Activated CD4-positive, alpha-beta memory T cell treated with anti-CD3 and anti-CD28 coated beads for 36 hours (primary cell): ENCODE measurements at regions of chr11 and their contacts with region 1.

Region 1: GRCh38 chr11:104918113-104918824 is 20.0 kb upstream of the CASP12 start:
- DNase-seq: no peak
- H3K4me3 Mint-ChIP-seq: peak overlapping the region; percentile 76
- H3K27ac Mint-ChIP-seq: peak overlapping the region; percentile 83
- H3K4me1 Mint-ChIP-seq: peaks cover 43% of the 10 kb centered on the region
- H3K27me3 Mint-ChIP-seq: no peaks in the 10 kb centered on the region

Region 2: DNA sequence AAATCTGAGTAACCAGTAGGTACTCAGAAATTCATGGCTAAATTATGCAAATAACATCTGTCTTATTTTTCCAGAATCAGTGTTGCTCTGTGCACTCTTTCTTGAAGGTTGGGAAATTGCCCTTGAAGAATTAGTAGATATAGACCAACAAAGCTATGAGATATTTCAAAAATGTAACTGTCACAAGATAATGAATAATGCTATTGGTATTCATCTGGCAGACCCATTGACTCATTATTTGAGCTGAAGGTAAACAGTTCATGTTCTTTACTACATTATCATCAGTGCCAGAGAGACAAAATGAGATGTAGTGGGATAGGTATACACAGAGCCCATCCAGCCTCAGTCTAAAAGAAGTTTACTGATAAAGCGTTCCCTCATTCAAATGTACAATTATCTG is 294.8 kb before region 1 on chr11:
- CTCF ChIA-PET with region 1: no interaction called
- POLR2A ChIA-PET with region 1: no interaction called
- intact Hi-C with region 1: loop called (anchors 5 kb)
- DNase-seq: no peak
- H3K4me3 Mint-ChIP-seq: no peak overlapping the region
- H3K27ac Mint-ChIP-seq: no peak overlapping the region
- H3K4me1 Mint-ChIP-seq: peaks cover 21% of the 10 kb centered on the region
- H3K27me3 Mint-ChIP-seq: no peaks in the 10 kb centered on the region

Region 3: DNA sequence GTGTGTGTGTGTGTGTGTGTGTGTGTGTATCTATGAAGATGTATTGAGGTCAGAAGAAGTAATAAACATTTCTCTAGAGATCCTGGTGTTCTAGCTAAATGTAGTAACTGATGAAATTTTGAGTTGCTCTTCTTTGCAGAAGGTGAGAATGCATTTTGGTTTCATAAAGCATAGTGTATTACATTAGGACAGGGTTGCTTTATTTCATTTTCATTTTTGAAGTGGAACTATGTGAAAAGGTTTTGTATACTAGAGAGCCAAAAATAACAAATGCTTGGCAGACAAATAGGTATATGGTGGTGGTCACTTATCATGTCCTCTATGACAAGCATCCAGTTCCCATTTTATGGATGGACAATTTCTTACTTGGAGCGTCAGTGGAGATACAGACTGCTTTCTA is 119.0 kb before region 1 on chr11:
- CTCF ChIA-PET with region 1: no interaction called
- POLR2A ChIA-PET with region 1: no interaction called
- intact Hi-C with region 1: loop called (anchors 5 kb)
- DNase-seq: no peak
- H3K4me3 Mint-ChIP-seq: peak overlapping the region; percentile 20
- H3K27ac Mint-ChIP-seq: peak overlapping the region; percentile 58
- H3K4me1 Mint-ChIP-seq: peaks cover 31% of the 10 kb centered on the region
- H3K27me3 Mint-ChIP-seq: no peaks in the 10 kb centered on the region

Region 4: DNA sequence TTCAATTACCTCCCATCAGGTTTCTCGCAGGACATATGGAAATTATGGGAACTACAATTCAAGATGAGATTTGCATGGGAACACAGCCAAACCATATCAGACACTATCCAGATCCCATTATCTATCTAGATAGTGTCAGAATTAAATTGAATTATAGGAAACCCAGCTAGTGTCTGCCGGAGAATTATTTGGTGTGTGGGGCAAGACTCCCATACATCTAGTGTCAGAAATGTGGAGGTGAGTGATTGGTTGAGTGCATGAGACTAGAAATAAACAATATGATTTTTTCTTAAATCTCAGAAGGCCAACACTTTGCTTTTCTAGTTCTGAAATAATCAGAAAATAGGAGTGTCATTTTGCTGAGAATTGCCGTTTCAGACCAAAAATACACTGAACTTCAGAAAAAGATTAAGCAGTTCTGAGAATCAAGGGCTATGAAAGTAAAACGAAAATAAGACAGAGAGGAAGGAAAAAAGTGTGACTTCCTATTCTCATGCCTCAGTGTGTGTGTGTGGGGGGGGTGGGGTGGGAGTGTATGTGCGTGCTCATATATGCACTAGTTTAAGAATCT is 41.3 kb before region 1 on chr11:
- CTCF ChIA-PET with region 1: no interaction called
- POLR2A ChIA-PET with region 1: no interaction called
- intact Hi-C with region 1: loop called (anchors 2 kb)
- DNase-seq: no peak
- H3K4me3 Mint-ChIP-seq: peak overlapping the region; percentile 3
- H3K27ac Mint-ChIP-seq: peak overlapping the region; percentile 23
- H3K4me1 Mint-ChIP-seq: peaks cover 31% of the 10 kb centered on the region
- H3K27me3 Mint-ChIP-seq: no peaks in the 10 kb centered on the region

Region 5: GRCh38 chr11:104897891-104898684 is 20.2 kb before region 1 on chr11 and contains the start of gene CASP12:
- CTCF ChIA-PET with region 1: no interaction called
- POLR2A ChIA-PET with region 1: no interaction called
- intact Hi-C with region 1: loop called (anchors 1 kb)
- DNase-seq: peak; percentile 33
- H3K4me3 Mint-ChIP-seq: peak within 1 kb of the TSS; percentile 74
- H3K27ac Mint-ChIP-seq: peak within 1 kb of the TSS; percentile 81
- H3K4me1 Mint-ChIP-seq: peaks cover 30% of the 10 kb centered on the region
- H3K27me3 Mint-ChIP-seq: no peaks in the 10 kb centered on the region
- total RNA-seq, gene CASP12: not detected

Region 6: GRCh38 chr11:104907521-104908185 is 10.6 kb before region 1 on chr11:
- CTCF ChIA-PET with region 1: no interaction called
- POLR2A ChIA-PET with region 1: interaction called, 12 read pairs
- intact Hi-C with region 1: loop called (anchors 1 kb)
- DNase-seq: peak; percentile 20
- H3K4me3 Mint-ChIP-seq: peak overlapping the region; percentile 24
- H3K27ac Mint-ChIP-seq: peak overlapping the region; percentile 76
- H3K4me1 Mint-ChIP-seq: peaks cover 30% of the 10 kb centered on the region
- H3K27me3 Mint-ChIP-seq: no peaks in the 10 kb centered on the region

Region 7: GRCh38 chr11:104968355-104968855 is 50.1 kb after region 1 on chr11 and contains the start of gene CASP4:
- CTCF ChIA-PET with region 1: no interaction called
- POLR2A ChIA-PET with region 1: interaction called, 3 read pairs
- intact Hi-C with region 1: loop called (anchors 1 kb)
- DNase-seq: no peak
- H3K4me3 Mint-ChIP-seq: peak within 1 kb of the TSS; percentile 89
- H3K27ac Mint-ChIP-seq: peak within 1 kb of the TSS; percentile 92
- H3K4me1 Mint-ChIP-seq: peaks cover 36% of the 10 kb centered on the region
- H3K27me3 Mint-ChIP-seq: no peaks in the 10 kb centered on the region
- total RNA-seq, gene CASP4: 58.2 to 58.3 TPM